Mammary epithelial cell (primary cell): ENCODE measurements at regions of chr22 and their contacts with region 1.

Region 1: GRCh38 chr22:44309137-44309536 is 3.6 kb downstream of the SHISAL1 start:
- DNase-seq: peak; percentile 97
- H3K4me3 ChIP-seq: no peak overlapping the region
- H3K27ac ChIP-seq: peak overlapping the region; percentile 12
- H3K4me1 ChIP-seq: peaks cover 24% of the 10 kb centered on the region
- H3K27me3 ChIP-seq: no peaks in the 10 kb centered on the region
- CTCF ChIP-seq: no peak

Region 2: GRCh38 chr22:43985532-43985931 is 323.6 kb before region 1 on chr22:
- CTCF ChIA-PET with region 1: no interaction called
- dilution Hi-C with region 1: loop called (anchors 10 kb)
- in situ Hi-C with region 1: no loop called
- intact Hi-C with region 1: no loop called
- DNase-seq: no peak
- H3K4me3 ChIP-seq: no peak overlapping the region
- H3K27ac ChIP-seq: no peak overlapping the region
- H3K4me1 ChIP-seq: no peaks in the 10 kb centered on the region
- H3K27me3 ChIP-seq: no peaks in the 10 kb centered on the region
- CTCF ChIP-seq: no peak

Region 3: DNA sequence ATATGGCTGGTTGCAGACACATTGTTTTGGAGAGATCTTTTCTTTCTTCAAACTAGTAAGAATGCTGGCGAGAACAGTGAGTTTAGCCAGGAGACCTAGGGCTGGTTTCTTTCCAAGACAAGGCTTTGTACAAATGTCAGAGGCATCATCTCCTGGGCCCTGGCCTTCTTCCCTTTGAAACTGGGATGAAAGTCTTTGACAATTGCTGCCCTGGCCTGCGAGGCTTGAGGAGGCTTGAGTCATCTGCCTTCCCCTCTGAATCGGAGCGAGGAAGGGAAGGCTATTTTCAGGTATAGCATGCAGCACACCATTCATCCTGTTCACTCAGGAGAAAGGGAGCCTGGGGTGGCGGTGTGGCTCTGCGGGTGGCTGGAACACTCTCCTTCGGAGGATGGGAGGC is 149.9 kb before region 1 on chr22:
- CTCF ChIA-PET with region 1: no interaction called
- dilution Hi-C with region 1: loop called (anchors 5 kb)
- in situ Hi-C with region 1: no loop called
- intact Hi-C with region 1: no loop called
- DNase-seq: no peak
- H3K4me3 ChIP-seq: no peak overlapping the region
- H3K27ac ChIP-seq: no peak overlapping the region
- H3K4me1 ChIP-seq: no peaks in the 10 kb centered on the region
- H3K27me3 ChIP-seq: no peaks in the 10 kb centered on the region
- CTCF ChIP-seq: no peak

Region 4: DNA sequence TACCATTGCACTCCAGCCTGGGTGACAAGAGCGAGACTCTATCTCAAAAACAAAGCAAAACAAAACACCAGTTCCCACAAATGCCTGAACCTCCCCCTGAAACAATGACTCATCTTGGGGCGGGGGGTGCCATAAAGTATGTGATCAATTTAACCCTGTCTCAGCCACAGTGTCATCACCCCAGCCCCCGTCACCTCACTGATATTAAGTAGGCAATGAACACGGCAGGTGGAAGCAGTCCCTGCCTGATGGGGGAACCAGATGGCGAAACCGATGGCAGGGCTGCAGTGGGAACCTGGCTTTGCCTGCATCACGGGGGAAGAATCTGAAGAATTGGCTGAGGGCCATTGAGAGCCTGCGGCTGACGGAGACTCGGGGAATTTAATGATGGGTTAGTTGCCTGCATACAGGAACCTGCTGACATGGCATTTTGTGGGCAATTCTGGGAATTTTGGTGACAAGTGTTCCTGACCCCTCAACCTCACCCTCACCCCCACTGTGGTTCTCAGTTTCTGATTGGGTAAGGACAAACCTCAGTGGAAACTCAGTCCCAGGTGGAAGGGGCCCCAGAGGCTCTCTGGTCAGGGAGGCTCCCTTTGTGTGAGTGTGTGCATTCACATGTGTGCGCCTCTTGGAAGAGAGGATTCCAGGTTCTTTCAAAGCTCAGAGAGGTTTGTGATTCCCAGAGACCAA is 42.7 kb after region 1 on chr22:
- CTCF ChIA-PET with region 1: no interaction called
- dilution Hi-C with region 1: loop called (anchors 5 kb)
- in situ Hi-C with region 1: no loop called
- intact Hi-C with region 1: no loop called
- DNase-seq: peak; percentile 92
- H3K4me3 ChIP-seq: no peak overlapping the region
- H3K27ac ChIP-seq: peak overlapping the region; percentile 4
- H3K4me1 ChIP-seq: peaks cover 17% of the 10 kb centered on the region
- H3K27me3 ChIP-seq: no peaks in the 10 kb centered on the region
- CTCF ChIP-seq: no peak